BJ (cell line): ENCODE measurements at regions of chr1 and their contacts with region 1.

Region 1: GRCh38 chr1:28602536-28603439 is 10.7 kb downstream of the RAB42 start:
- DNase-seq: no peak
- H3K4me3 ChIP-seq: no peak overlapping the region
- H3K27me3 ChIP-seq: no peaks in the 10 kb centered on the region
- CTCF ChIP-seq: peak; percentile 76

Region 2: DNA sequence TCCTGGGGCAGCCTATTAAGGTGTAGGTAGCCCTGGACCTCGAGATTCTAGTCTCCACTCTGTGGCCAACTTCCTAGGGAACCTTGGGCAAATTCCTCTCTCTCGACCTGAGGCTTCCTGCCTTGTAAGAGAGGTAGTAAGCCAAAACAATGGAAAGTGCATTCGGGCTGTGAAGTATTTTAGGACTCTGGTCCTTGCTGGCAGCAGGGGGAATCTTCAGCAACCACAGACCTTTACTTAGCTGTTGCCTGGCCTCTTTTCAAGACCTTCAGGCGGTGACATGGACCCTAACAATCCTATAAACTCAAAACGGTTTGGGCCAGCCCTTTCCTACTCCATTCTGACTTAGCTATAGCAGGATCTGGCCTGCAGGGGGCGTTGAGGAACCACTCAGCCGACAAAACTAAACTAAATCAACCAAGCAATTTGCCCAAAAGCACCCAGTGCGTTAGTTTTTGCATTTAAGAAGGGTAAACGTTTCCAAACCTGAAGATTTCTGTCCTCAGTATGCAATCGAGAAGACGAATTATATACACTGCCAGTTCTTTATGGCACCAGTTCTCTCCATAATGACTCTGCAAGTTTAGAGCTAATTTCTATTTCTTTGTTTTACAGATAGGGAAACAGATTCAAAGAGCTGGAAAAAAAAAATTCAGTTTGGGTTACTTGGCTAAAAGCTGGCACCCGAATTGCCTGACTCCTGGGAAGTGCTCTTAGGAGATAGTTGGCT is 354.3 kb before region 1 on chr1:
- CTCF ChIA-PET with region 1: interaction called, 23 read pairs
- POLR2A ChIA-PET with region 1: no interaction called
- DNase-seq: no peak
- H3K4me3 ChIP-seq: no peak overlapping the region
- H3K27me3 ChIP-seq: no peaks in the 10 kb centered on the region
- CTCF ChIP-seq: peak; percentile 97

Region 3: DNA sequence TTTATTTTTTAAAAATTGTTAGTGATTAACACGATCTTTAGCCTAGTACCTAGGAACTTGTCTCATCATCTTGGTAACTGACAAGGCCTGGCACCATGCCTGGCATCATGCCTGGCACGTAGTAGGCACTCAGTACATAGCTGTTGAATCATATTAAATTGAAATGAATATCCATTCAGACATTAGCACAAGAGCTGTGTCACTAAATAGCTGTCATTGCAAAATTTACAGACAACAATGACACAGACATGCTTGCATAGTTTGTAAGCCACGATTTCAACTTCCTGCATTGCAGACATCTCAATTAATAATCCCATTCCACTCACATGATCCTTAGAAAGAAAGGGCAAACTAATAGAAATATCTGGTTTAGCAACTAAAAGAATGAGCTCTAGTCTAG is 248.7 kb before region 1 on chr1:
- CTCF ChIA-PET with region 1: interaction called, 60 read pairs
- POLR2A ChIA-PET with region 1: no interaction called
- DNase-seq: no peak
- H3K4me3 ChIP-seq: no peak overlapping the region
- H3K27me3 ChIP-seq: no peaks in the 10 kb centered on the region
- CTCF ChIP-seq: no peak

Region 4: GRCh38 chr1:28359592-28360239 is 243.1 kb before region 1 on chr1:
- CTCF ChIA-PET with region 1: interaction called, 60 read pairs
- POLR2A ChIA-PET with region 1: no interaction called
- DNase-seq: no peak
- H3K4me3 ChIP-seq: no peak overlapping the region
- H3K27me3 ChIP-seq: no peaks in the 10 kb centered on the region
- CTCF ChIP-seq: peak; percentile 65

Region 5: GRCh38 chr1:28409090-28409489 is 193.7 kb before region 1 on chr1:
- CTCF ChIA-PET with region 1: interaction called, 12 read pairs
- POLR2A ChIA-PET with region 1: no interaction called
- DNase-seq: no peak
- H3K4me3 ChIP-seq: no peak overlapping the region
- H3K27me3 ChIP-seq: no peaks in the 10 kb centered on the region
- CTCF ChIP-seq: no peak

Region 6: GRCh38 chr1:28428012-28428411 is 174.8 kb before region 1 on chr1:
- CTCF ChIA-PET with region 1: no interaction called
- POLR2A ChIA-PET with region 1: no interaction called
- DNase-seq: no peak
- H3K4me3 ChIP-seq: no peak overlapping the region
- H3K27me3 ChIP-seq: no peaks in the 10 kb centered on the region
- CTCF ChIP-seq: no peak

Region 7: DNA sequence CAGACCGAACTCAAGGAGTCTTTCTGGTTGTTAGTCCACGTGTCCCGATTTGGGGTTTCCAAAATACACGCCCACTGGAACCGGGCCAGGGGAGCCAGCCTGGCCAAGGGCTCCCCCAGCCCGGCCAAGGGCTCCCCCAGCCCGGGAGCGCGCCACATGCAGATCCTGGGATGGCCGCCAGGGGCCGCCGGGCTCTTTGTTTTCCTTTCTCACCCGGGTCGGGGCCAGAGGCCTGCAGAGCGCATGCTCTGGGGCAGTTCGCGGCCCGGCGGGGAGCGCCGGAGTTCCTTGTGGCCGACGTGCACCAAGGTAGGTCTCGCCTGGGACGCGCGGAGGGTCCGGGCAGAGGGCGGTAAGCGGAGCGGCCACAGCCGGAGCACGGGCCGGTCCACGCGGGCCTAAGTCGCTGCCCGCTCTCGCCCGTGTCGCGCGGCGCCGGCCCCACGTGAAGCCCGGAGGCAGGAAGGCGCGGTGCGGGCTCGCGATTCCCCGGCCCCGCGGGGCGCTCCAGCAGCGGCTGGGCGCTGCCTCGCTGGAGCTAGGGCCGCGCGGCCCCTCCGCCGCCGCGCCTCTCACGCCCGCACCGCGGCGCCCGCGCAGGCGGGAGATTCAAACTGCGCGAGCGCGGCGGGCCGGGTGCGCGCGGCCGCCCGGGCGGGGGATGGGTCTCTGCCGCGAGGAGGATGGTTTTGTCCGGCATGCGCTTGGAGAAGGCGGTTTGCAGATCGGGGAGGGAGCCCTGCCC is 84.6 kb before region 1 on chr1:
- CTCF ChIA-PET with region 1: interaction called, 25 read pairs
- POLR2A ChIA-PET with region 1: interaction called, 10 read pairs
- DNase-seq: peak; percentile 35
- H3K4me3 ChIP-seq: peak overlapping the region; percentile 45
- H3K27me3 ChIP-seq: no peaks in the 10 kb centered on the region
- CTCF ChIP-seq: peak; percentile 97

Region 8: GRCh38 chr1:28581536-28582247 is 21.1 kb before region 1 on chr1:
- CTCF ChIA-PET with region 1: interaction called, 11 read pairs
- POLR2A ChIA-PET with region 1: interaction called, 15 read pairs
- DNase-seq: peak; percentile 75
- H3K4me3 ChIP-seq: peak overlapping the region; percentile 93
- H3K27me3 ChIP-seq: no peaks in the 10 kb centered on the region
- CTCF ChIP-seq: no peak

Region 9: DNA sequence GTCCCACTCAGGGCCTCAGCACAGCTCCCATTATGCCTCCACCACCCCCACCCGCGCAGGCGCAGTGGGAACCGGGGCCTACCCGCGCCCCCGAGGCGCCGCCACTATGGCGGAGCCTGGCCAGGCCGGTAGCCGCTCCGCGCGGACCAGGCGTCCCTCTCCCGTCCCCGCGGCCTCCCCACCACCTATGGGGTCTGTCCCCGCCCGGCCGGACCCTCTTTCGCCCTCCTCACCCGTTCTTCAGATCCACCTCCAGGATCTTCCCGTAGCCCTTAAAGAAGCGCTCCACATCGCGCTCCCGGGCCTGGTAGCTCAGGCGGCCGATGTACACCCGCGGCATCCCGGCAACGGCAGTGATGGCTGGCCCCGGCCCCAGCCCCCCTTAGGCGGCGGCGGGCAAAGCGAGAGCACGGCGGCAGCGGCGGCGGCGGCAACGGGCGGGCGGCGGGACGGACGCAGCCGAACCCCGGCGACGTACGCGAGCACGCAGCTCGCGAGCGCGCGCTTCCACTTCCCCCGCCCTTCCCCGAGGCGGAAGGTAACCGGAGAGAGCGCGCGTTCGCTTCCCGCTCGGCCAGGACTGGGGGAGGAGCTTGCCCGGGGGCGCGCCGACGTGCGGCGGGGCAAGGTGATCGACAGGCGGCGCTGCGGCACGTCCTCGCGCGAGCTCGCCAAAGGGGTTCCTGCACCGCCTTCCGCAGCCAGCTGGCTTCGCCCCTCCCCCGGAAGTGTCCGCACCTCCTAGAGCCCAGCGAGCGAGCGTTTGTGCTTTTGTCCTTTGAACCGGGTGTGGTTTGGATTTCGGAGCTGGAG is 578.8 kb after region 1 on chr1 and contains the start of gene SRSF4:
- CTCF ChIA-PET with region 1: no interaction called
- POLR2A ChIA-PET with region 1: no interaction called
- DNase-seq: peak; percentile 92
- H3K4me3 ChIP-seq: peak within 1 kb of the TSS; percentile 95
- H3K27me3 ChIP-seq: no peaks in the 10 kb centered on the region
- CTCF ChIP-seq: peak; percentile 57
- polyA plus RNA-seq, gene SRSF4: 19.6 and 30.7 TPM in 2 replicates